ENCODE measurements at regions of chr1 and their contacts with region 1.

Region 1: GRCh38 chr1:91924146-91924545 is 25.1 kb upstream of the BRDT start:
- DNase-seq: no peak
- ATAC-seq: no peak
- H3K4me3 ChIP-seq: no peak overlapping the region
- H3K27ac ChIP-seq: no peak overlapping the region
- H3K4me1 ChIP-seq: no peaks in the 10 kb centered on the region
- H3K27me3 ChIP-seq: no peaks in the 10 kb centered on the region
- CTCF ChIP-seq: no peak
- POLR2A ChIP-seq: no peak

Region 2: GRCh38 chr1:91617285-91617765 is 306.8 kb before region 1 on chr1:
- intact Hi-C with region 1: loop called (anchors 5 kb)
- DNase-seq: peak; percentile 81 to 90 (median 90)
- ATAC-seq: peak; percentile 99
- H3K4me3 ChIP-seq: no peak overlapping the region
- H3K27ac ChIP-seq: peak overlapping the region in 1 of 4 donors; percentile 54
- H3K4me1 ChIP-seq: peaks cover 19% of the 10 kb centered on the region
- H3K27me3 ChIP-seq: no peaks in the 10 kb centered on the region
- CTCF ChIP-seq: peak; percentile 51 to 93 (median 83)
- POLR2A ChIP-seq: no peak